AG04449 (cell line): ENCODE measurements at regions of chr1 and their contacts with region 1.

Region 1: GRCh38 chr1:35882945-35883634 is at the start of gene AGO1:
- DNase-seq: peak; percentile 21
- H3K4me3 ChIP-seq: peak within 1 kb of the TSS; percentile 92
- CTCF ChIP-seq: peak; percentile 100

Region 2: GRCh38 chr1:35857830-35858229 is 25.3 kb before region 1 on chr1:
- CTCF ChIA-PET with region 1: interaction called, 69 read pairs
- POLR2A ChIA-PET with region 1: no interaction called
- DNase-seq: no peak
- H3K4me3 ChIP-seq: no peak overlapping the region
- CTCF ChIP-seq: no peak

Region 3: GRCh38 chr1:35866991-35867390 is 16.1 kb before region 1 on chr1:
- CTCF ChIA-PET with region 1: interaction called, 69 read pairs
- POLR2A ChIA-PET with region 1: no interaction called
- DNase-seq: no peak
- H3K4me3 ChIP-seq: no peak overlapping the region
- CTCF ChIP-seq: no peak

Region 4: DNA sequence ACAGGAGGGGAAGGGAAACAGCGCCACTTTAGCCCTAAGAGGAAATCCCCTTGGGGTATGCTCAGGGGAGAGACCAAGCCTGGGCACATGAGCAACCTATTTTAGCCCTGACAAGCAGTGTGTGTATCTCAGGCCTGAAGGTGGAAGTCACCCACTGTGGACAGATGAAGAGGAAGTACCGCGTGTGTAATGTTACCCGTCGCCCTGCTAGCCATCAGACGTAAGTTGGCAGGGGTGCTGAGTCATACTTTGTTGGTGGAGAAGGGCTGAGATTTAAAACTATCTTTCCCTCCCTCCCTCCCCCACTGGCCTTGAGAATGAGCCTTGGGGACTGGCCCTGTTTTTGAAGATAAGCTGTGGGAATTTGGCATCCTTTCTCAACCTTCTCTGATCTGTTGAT is 11.1 kb after region 1 on chr1:
- CTCF ChIA-PET with region 1: interaction called, 22 read pairs
- POLR2A ChIA-PET with region 1: no interaction called
- DNase-seq: no peak
- H3K4me3 ChIP-seq: no peak overlapping the region
- CTCF ChIP-seq: no peak

Region 5: DNA sequence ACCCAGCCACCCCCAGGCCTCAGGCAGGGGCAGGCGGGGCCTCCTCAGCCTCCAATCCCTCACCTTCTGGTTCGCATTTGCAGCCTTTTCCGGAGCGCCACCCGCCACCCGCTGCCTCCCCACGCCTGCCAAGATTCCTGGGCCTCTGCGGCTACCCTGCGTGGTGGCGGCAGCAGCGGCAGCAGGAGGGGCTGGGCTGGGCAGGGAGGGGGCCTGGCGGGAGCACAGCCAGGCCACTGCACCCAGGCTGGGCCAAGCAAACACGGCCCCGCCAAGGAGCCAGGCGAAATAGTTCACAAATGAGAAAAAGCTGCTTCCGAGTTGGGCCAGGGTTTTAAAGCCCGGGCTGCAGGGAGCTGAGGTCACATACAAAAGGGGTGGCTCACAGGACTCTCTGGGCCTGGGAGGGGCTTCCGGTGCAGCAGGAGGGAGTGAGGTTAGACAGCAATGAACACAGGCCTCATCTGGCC is 232.1 kb after region 1 on chr1:
- CTCF ChIA-PET with region 1: no interaction called
- POLR2A ChIA-PET with region 1: no interaction called
- DNase-seq: peak; percentile 55
- H3K4me3 ChIP-seq: 0 out of 2 replicates have a peak overlapping the region, but pooled peaks have one; percentile 1
- CTCF ChIP-seq: no peak